ENCODE measurements at regions of chr12 and their contacts with region 1.

Region 1: GRCh38 chr12:56224102-56224701 is at the start of gene NABP2:
- DNase-seq: peak; percentile 97
- ATAC-seq: peak; percentile 81
- H3K4me3 Mint-ChIP-seq: peak within 1 kb of the TSS; percentile 98
- H3K27ac Mint-ChIP-seq: peak within 1 kb of the TSS; percentile 87
- H3K4me1 Mint-ChIP-seq: peaks cover 27% of the 10 kb centered on the region
- H3K27me3 Mint-ChIP-seq: no peaks in the 10 kb centered on the region
- CTCF ChIP-seq: peak; percentile 89
- total RNA-seq, gene NABP2: 58.7 to 60.2 TPM

Region 2: DNA sequence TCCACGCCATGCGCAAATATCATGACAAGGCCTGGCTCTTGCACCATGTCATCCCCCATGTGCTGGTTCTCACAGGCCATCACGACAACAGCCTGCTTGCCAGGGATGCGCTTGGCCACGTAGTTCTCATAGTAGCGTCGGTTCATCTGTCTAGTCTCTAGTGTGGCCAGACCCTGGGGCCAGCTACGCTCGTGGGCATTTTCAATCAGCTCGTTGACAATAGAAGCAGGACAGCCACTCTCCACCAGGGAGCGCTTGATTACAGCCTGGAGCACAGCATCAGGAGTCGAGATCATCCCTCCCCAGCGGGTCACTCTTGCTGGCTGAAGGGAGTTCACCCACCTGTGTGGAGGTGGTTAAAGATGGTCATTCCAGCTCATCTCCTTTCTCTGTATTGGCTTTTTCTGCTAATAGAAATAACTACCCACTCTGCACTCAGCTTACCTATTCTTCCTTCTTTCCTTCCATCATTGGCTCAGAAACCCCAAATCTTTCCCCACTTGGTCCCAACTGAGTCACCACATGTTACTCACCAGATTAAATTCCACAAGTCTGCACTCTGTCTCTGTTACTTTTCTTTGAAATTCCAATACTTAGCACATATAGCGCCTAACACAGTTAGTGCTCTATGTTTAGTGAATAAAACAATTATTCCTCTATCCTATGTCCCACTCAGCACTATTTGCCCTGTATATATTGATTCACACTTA is 17.6 kb before region 1 on chr12:
- CTCF ChIA-PET with region 1: interaction called, 40 read pairs
- POLR2A ChIA-PET with region 1: interaction called, 7 read pairs
- intact Hi-C with region 1: no loop called
- DNase-seq: peak; percentile 67
- ATAC-seq: peak; percentile 80
- H3K4me3 Mint-ChIP-seq: no peak overlapping the region
- H3K27ac Mint-ChIP-seq: no peak overlapping the region
- H3K4me1 Mint-ChIP-seq: peaks cover 4% of the 10 kb centered on the region
- H3K27me3 Mint-ChIP-seq: no peaks in the 10 kb centered on the region
- CTCF ChIP-seq: peak; percentile 36

Region 3: GRCh38 chr12:56266693-56267442 is 42.7 kb after region 1 on chr12 and contains the start of gene COQ10A:
- CTCF ChIA-PET with region 1: interaction called, 7 read pairs
- POLR2A ChIA-PET with region 1: interaction called, 4 read pairs
- intact Hi-C with region 1: loop called (anchors 5 kb)
- DNase-seq: peak; percentile 90
- ATAC-seq: peak; percentile 90
- H3K4me3 Mint-ChIP-seq: peak within 1 kb of the TSS; percentile 93
- H3K27ac Mint-ChIP-seq: peak within 1 kb of the TSS; percentile 91
- H3K4me1 Mint-ChIP-seq: peaks cover 19% of the 10 kb centered on the region
- H3K27me3 Mint-ChIP-seq: no peaks in the 10 kb centered on the region
- CTCF ChIP-seq: peak; percentile 84
- total RNA-seq, gene COQ10A: 7.9 to 9.6 TPM